ENCODE measurements at regions of chr22 and their contacts with region 1.

Region 1: DNA sequence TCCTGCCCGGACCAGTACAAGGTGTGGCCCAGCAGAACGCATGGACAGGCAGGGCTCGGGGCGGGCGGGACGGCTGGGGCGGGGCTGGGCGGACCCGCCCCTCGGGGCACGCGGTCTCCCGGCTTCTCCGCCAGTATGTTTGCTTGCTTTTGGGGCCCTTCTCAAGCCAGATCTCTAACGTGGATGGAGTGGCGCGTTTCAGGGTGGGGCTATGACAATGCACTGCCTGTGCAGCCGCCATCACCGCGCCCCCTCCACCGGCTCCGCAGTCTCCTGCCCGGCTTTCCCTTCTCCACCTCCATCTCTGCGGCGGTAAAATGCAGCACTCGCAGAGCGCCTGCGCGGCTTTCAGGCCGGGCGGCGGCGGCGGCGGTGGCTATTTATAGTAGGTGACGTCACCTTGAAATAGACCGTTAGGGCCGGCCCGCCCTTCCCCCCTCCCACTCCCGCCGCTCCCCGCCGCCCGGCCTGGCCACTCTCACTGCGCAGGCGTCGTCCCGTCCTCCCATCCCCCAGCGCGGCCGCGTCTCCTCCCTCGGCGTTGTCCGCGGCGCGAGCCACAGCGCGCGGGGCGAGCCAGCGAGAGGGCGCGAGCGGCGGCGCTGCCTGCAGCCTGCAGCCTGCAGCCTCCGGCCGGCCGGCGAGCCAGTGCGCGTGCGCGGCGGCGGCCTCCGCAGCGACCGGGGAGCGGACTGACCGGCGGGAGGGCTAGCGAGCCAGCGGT is at the start of gene YWHAH:
- DNase-seq: peak; percentile 87
- H3K4me3 Mint-ChIP-seq: peak within 1 kb of the TSS; percentile 90
- H3K27ac Mint-ChIP-seq: peak within 1 kb of the TSS; percentile 96
- H3K4me1 Mint-ChIP-seq: peaks cover 21% of the 10 kb centered on the region
- H3K27me3 Mint-ChIP-seq: no peaks in the 10 kb centered on the region
- total RNA-seq, gene YWHAH: 128 and 139 TPM in 2 replicates

Region 2: GRCh38 chr22:31399211-31400028 is 544.7 kb before region 1 on chr22 and contains the start of gene DRG1:
- intact Hi-C with region 1: loop called (anchors 2 kb)
- DNase-seq: peak; percentile 97
- H3K4me3 Mint-ChIP-seq: peak within 1 kb of the TSS; percentile 100
- H3K27ac Mint-ChIP-seq: peak within 1 kb of the TSS; percentile 93
- H3K4me1 Mint-ChIP-seq: peaks cover 13% of the 10 kb centered on the region
- H3K27me3 Mint-ChIP-seq: peaks cover 2% of the 10 kb centered on the region
- total RNA-seq, gene DRG1: 113 and 125 TPM in 2 replicates

Region 3: DNA sequence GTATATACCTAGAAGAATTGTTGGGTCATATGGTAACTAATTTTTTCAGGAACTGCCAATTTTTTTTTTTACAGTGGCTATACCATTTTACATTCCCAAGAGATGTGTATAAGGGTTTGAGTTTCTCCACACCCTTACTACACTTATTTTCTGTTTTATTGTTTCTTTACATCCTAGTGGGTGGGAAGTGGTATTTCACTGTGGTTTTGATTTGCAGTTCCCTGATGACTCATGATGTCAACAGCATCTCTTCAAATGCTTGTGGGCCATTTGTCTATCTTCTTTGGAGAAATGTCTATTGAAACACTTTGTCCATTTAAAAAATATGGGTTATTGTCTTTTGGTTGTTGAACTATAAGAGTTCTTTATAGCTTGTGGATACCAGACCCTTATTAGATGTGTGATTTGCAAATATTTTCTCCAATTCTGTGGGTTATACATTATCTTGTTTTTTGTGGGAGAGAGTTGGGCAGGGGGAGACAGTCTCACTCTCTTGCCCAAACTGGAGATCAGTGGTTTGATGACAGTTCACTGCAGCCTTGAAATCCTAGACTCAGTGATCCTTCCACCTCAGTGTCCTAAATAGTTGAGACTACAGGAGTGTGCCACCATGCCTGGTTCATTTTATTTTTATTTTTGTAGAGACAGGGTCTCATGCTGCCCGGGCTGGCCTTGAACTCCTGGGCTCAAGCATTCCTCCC is 251.8 kb before region 1 on chr22:
- intact Hi-C with region 1: loop called (anchors 1 kb)
- DNase-seq: peak; percentile 11
- H3K4me3 Mint-ChIP-seq: peak overlapping the region; percentile 53
- H3K27ac Mint-ChIP-seq: peak overlapping the region; percentile 87
- H3K4me1 Mint-ChIP-seq: peaks cover 31% of the 10 kb centered on the region
- H3K27me3 Mint-ChIP-seq: no peaks in the 10 kb centered on the region

Region 4: DNA sequence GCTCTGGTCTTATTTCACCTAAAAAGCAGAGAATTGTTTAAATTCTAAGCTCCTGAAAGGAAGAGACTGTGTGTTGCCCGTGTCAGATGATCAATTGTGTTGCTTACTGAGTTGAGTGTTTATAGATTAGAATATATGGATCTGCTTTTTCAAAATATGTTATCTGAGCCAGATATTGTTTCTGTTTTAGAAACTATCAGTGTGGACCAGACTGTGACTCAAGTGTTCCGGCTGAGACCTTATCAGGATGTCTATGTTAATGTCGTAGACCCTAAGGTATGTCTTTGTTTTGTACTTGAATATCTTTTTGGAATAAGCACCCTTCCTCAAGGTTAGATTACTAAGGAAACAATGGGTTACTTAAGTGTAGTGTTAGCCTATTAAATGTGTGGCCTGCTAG is 179.4 kb before region 1 on chr22:
- intact Hi-C with region 1: no loop called
- DNase-seq: no peak
- H3K4me3 Mint-ChIP-seq: no peak overlapping the region
- H3K27ac Mint-ChIP-seq: no peak overlapping the region
- H3K4me1 Mint-ChIP-seq: no peaks in the 10 kb centered on the region
- H3K27me3 Mint-ChIP-seq: no peaks in the 10 kb centered on the region

Region 5: DNA sequence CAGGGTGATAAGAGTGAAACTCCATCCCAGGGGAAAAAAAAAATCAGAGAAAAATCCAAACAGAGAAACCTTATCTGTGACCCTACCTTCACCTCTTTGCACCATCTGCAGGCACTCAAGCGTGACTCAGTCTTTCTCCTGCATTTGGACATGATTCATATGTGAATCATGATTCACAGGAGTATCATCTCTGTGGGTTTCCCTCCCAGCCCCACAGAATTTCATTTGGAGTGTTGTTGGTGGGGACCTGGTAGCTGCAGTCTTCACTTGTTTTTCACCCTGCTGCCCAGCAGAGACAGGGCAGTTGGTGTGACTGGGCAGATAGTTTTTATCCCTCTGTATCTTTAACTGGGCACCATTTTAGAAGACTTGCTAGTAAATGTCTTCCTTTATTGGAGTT is 114.6 kb before region 1 on chr22:
- intact Hi-C with region 1: loop called (anchors 1 kb)
- DNase-seq: peak; percentile 7
- H3K4me3 Mint-ChIP-seq: peak overlapping the region; percentile 72
- H3K27ac Mint-ChIP-seq: peak overlapping the region; percentile 95
- H3K4me1 Mint-ChIP-seq: peaks cover 30% of the 10 kb centered on the region
- H3K27me3 Mint-ChIP-seq: no peaks in the 10 kb centered on the region

Region 6: GRCh38 chr22:31872209-31872608 is 71.9 kb before region 1 on chr22:
- intact Hi-C with region 1: loop called (anchors 5 kb)
- DNase-seq: no peak
- H3K4me3 Mint-ChIP-seq: no peak overlapping the region
- H3K27ac Mint-ChIP-seq: no peak overlapping the region
- H3K4me1 Mint-ChIP-seq: peaks cover 9% of the 10 kb centered on the region
- H3K27me3 Mint-ChIP-seq: no peaks in the 10 kb centered on the region

Region 7: GRCh38 chr22:31970490-31971444 is 26.6 kb after region 1 on chr22:
- intact Hi-C with region 1: loop called (anchors 1 kb)
- DNase-seq: peak; percentile 86
- H3K4me3 Mint-ChIP-seq: peak overlapping the region; percentile 77
- H3K27ac Mint-ChIP-seq: no peak overlapping the region
- H3K4me1 Mint-ChIP-seq: peaks cover 14% of the 10 kb centered on the region
- H3K27me3 Mint-ChIP-seq: peaks cover 4% of the 10 kb centered on the region